Aorta (tissue), 5 donors: ENCODE measurements at regions of chr6 and their contacts with region 1.

Region 1: DNA sequence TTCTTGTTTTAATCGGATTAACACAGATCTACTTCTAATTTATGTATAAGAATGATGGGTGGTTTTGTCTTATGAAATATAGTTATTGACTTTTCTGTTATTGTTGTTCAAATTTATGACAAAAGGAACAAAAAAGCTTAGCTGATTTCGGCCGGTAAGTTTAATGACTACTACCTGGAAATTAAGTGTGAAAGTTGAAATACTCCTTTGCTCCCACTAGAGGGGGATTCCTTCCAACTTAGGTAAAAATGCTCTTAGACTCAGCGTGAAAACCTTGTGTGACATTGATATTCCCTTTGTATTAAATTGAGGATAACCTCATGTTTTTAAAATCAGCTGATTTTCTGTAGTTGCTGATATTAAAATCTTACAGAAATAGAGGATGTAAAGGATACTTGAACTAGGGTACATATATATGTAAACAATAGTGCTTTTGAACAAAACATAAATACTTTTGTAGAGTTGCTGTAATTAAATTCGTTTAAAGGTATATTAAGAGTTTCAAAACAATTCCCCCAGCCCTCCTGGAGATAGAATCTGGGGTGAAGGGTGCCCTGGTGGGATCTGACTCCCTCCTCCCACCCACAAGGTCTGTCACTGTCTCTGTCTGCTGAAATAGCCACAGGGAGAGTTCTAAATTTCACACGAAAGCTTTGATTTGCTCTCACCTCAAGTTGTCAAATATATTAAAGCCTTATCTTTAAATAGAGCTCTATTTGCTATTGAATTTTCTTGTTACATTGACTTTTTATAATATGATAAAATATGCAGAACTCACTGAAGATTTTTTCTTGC is 257.5 kb downstream of the ARID1B start:
- DNase-seq: no peak
- ATAC-seq: no peak
- H3K4me3 ChIP-seq: no peak overlapping the region
- H3K27ac ChIP-seq: no peak overlapping the region
- H3K4me1 ChIP-seq: peaks cover 0 to 8% of the 10 kb centered on the region in 2 donors
- H3K27me3 ChIP-seq: no peaks in the 10 kb centered on the region

Region 2: DNA sequence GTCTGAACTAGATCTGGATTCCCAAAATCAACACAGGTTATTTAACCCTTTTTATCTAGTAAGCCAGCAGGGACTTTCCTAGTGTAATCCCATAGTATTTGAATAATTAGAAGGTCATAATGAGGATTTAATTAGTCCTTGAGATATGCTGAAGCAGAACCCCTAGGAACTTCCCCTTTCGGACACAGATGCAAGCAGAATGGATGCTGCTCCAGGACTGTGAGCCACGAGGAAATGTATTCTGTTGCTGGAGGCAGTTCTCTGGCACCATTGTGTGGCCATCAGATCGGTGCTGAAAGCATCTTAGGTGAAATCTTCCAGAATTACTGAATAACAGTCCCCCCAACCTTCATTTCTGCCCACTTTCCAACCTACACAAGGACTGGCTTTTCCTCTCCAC is 81.8 kb after region 1 on chr6:
- intact Hi-C with region 1: no loop called
- DNase-seq: no peak
- ATAC-seq: no peak
- H3K4me3 ChIP-seq: no peak overlapping the region
- H3K27ac ChIP-seq: no peak overlapping the region
- H3K4me1 ChIP-seq: no peaks in the 10 kb centered on the region
- H3K27me3 ChIP-seq: no peaks in the 10 kb centered on the region

Region 3: DNA sequence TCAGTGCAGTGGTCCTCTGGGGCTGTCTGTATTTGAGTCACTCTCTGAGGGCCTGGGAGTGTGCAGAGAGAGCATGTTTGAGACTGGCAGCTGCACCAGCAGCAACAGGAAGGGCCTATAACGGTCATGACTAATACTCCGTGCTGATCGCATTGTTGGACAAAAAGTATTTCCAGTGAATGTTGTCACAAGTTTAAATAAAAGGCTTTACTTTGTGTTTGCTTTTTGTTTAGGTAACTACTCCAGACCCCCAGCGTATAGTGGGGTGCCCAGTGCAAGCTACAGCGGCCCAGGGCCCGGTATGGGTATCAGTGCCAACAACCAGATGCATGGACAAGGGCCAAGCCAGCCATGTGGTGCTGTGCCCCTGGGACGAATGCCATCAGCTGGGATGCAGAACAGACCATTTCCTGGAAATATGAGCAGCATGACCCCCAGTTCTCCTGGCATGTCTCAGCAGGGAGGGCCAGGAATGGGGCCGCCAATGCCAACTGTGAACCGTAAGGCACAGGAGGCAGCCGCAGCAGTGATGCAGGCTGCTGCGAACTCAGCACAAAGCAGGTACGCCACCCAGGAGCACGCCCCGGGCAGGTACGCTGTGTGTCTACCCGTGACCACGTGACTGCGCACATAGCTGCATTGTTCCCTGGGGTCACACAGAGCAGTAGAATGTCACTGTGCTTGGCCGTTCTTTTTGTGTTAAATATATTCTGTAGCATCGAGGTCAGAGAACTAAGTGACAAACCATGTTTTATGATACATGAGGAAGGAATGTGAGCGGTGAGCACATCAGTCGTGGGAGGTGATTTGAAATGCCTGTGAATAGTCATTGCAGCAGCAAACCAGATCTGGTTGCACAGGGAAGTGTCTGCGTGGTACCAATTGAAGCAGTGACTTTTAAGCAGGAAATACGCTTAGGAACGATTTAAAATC is 114.0 kb after region 1 on chr6:
- intact Hi-C with region 1: loop called in 1 of 2 experiments (anchors 10 kb)
- DNase-seq: peak; percentile 84 to 87
- ATAC-seq: peak; percentile 85
- H3K4me3 ChIP-seq: no peak overlapping the region
- H3K27ac ChIP-seq: peak overlapping the region; percentile 68 to 83
- H3K4me1 ChIP-seq: peaks cover 0 to 6% of the 10 kb centered on the region in 2 donors
- H3K27me3 ChIP-seq: no peaks in the 10 kb centered on the region

Region 4: GRCh38 chr6:157184202-157185020 is 149.8 kb after region 1 on chr6:
- intact Hi-C with region 1: loop called (anchors 5 to 10 kb)
- DNase-seq: peak; percentile 81 to 91
- ATAC-seq: peak; percentile 90
- H3K4me3 ChIP-seq: no peak overlapping the region
- H3K27ac ChIP-seq: peak overlapping the region in 1 of 2 donors; percentile 20
- H3K4me1 ChIP-seq: no peaks in the 10 kb centered on the region
- H3K27me3 ChIP-seq: no peaks in the 10 kb centered on the region

Region 5: GRCh38 chr6:157274471-157275226 is 240.0 kb after region 1 on chr6:
- intact Hi-C with region 1: loop called (anchors 5 to 10 kb)
- DNase-seq: peak; percentile 78 to 93
- ATAC-seq: peak; percentile 97
- H3K4me3 ChIP-seq: peak overlapping the region; percentile 48 to 71
- H3K27ac ChIP-seq: peak overlapping the region in 1 of 2 donors; percentile 90
- H3K4me1 ChIP-seq: no peaks in the 10 kb centered on the region
- H3K27me3 ChIP-seq: no peaks in the 10 kb centered on the region